ENCODE measurements at regions of chr17 and their contacts with region 1.

Region 1: DNA sequence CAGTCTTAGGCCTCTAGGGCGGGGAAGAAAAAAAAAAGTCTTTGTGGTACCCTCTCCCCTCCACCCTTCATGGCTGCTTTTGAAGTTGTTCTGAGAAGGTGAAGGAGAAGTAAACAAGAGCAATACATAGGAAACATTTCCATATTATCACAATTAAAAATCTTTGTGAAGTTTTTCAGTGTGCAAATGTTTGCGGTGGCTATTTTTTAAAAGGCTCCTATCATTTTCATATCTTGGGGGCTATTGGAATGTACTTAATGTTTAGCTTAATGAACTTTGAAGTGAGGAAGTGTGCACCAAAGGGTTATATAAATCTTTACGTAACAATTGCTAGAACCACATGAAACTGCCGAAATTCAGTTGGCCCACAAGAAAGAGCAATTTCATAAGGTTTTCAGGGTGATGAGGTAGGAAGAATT is 7.6 kb downstream of the NOL11 start:
- ATAC-seq: no peak
- H3K4me3 ChIP-seq: no peak overlapping the region
- H3K27ac ChIP-seq: no peak overlapping the region
- H3K4me1 ChIP-seq: no peaks in the 10 kb centered on the region

Region 2: DNA sequence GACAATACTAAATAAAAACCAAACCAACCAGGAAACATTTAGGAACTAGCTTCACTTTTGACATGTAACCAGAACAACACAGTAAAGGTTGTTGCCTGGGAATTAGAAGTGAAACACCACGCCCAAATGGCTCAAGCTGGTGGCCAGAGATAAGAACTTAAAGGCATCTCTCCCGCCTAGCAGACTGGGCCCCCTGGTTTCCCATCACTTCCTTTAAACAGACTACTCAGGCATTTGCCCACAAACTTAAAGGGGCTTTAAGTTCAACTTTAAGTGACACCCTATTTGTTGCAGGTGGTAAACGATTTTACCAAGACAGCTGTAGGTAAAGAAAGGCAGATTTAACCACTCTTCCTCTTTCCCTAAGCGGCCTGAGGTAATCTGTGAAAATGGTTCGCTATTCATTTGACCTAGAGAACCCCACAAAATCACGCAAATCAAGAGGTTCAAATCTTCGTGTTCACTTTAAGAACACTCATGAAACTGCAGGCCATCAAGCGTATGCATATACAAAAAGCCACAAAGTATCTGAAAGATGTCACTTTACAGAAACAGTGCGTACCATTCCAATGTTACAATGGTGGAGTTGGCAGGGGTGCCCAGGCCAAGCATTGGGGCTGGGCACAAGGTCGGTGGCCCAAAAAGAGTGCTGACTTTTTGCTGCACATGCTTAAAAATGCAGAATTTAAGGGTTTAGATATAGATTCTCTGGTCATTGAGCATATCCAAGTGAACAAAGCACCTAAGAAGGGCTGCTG is 59.2 kb after region 1 on chr17:
- in situ Hi-C with region 1: loop called in 1 of 9 experiments (anchors 10 kb)
- ATAC-seq: peak in 1 of 8 experiments; percentile 40
- H3K4me3 ChIP-seq: no peak overlapping the region
- H3K27ac ChIP-seq: no peak overlapping the region
- H3K4me1 ChIP-seq: no peaks in the 10 kb centered on the region

Region 3: GRCh38 chr17:68029512-68030215 is 304.3 kb after region 1 on chr17:
- in situ Hi-C with region 1: no loop called
- ATAC-seq: peak in 2 of 8 experiments; percentile 23
- H3K4me3 ChIP-seq: no peak overlapping the region
- H3K27ac ChIP-seq: no peak overlapping the region
- H3K4me1 ChIP-seq: peaks cover 0 to 9% of the 10 kb centered on the region in 2 donors